ENCODE measurements at regions of chr6 and their contacts with region 1.

Region 1: GRCh38 chr6:6659600-6660327 is 71.2 kb downstream of the LY86 start:
- DNase-seq: no peak
- H3K4me3 ChIP-seq: no peak overlapping the region
- H3K27ac ChIP-seq: peak overlapping the region in 6 of 8 donors; percentile 48 to 73 (median 70)
- H3K4me1 ChIP-seq: peaks cover 8 to 72% (median 47%) of the 10 kb centered on the region in 6 donors
- H3K27me3 ChIP-seq: no peaks in the 10 kb centered on the region
- CTCF ChIP-seq: no peak
- POLR2A ChIP-seq: no peak

Region 2: DNA sequence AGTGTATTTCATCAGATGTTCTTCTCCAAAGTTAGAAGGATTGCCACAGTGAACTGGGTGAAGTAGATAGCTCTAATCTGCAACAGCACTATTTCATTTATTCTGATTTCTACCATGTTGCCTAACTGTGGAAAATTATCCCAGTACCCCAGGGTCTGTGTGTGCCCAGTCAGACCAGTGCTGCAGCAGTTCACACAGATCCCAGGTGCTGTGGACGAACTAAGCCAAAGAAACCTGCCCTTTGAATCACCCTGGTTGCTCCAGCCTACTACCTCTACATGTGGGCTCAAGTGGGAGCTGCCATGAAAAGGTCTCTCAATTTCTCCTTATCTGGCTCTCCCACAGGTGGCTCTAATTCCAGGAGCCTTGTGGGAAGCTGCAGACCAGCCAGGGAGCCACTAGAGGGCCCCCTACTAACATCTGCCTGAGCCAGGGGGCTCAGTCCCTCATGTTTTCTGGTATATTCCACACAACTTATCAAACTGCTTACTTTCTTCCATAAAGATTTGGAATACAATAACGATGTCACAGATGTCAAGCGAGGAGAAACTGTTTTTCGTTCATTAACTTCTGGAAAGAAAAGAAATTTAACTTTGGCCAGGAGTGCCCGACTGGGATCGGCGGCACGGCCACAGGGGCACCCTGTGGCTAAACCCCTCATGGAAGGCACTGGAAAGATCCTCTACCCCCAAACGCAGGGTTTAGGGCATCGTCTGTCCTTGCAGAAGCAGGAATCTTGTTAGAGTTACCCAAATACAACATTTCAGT is 102.8 kb before region 1 on chr6:
- intact Hi-C with region 1: loop called (anchors 10 kb)
- DNase-seq: no peak
- H3K4me3 ChIP-seq: no peak overlapping the region
- H3K27ac ChIP-seq: no peak overlapping the region
- H3K4me1 ChIP-seq: peaks cover 0 to 12% (median 4%) of the 10 kb centered on the region in 6 donors
- H3K27me3 ChIP-seq: no peaks in the 10 kb centered on the region
- CTCF ChIP-seq: peak in 10 of 11 experiments; percentile 43 to 91 (median 82)
- POLR2A ChIP-seq: no peak

Measured in spleen (tissue), 13 donors.